GM12878 (cell line): ENCODE measurements at regions of chr9 and their contacts with region 1.

Region 1: DNA sequence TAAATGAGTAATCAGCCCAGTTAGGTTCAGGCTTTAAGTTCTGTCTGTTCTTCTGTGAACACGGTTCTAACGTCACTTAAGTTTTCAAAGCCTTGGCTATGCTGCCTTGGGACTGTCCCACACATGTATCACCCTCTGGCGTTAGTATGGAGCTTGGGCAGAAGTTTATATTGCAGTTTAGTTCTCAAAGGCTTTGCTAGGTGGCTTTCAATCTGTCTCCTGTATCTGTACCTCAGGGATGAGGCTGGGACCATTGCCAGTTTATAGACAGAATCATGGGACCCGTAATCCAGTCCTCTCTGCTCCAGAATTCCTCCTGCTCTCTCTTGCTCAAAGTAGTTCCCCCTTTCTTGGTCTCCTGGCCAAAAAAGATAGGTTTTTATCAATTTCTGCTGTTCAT is 12.1 kb downstream of the C9orf40 start:
- DNase-seq: no peak
- ATAC-seq: peak; percentile 84
- H3K4me3 ChIP-seq: no peak overlapping the region
- H3K27ac ChIP-seq: no peak overlapping the region
- H3K4me1 ChIP-seq: no peaks in the 10 kb centered on the region
- H3K27me3 ChIP-seq: no peaks in the 10 kb centered on the region
- CTCF ChIP-seq: peak in 2 of 3 experiments; percentile 6 to 34; a peak in 1 of 6 replicates
- EP300 ChIP-seq: no peak
- POLR2A ChIP-seq: no peak
- RAD21 ChIP-seq: no peak

Region 2: DNA sequence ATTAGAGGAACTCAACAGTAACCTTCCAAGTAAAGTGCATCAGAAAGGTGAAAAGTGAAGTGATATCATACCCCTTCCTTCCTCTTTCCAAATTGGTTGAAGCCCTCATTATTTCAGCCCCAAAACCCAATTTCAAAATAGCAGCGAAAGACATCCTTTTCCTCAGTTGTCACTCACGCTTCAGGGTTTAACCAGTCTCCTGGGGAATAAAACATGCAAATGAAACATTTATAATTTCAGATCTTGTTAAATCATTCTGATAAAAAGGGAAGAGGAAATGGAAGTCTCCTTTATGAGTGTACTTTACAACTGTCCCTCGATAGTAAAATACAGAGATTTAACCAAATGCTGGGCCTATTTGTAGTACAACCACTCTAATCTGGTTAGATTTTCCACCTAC is 75.4 kb before region 1 on chr9:
- CTCF ChIA-PET with region 1: no interaction called
- POLR2A ChIA-PET with region 1: no interaction called
- RAD21 ChIA-PET with region 1: no interaction called
- SMC1A ChIA-PET with region 1: no interaction called
- in situ Hi-C with region 1: no loop called
- intact Hi-C with region 1: loop called (anchors 5 kb)
- DNase-seq: peak; percentile 46
- ATAC-seq: peak; percentile 76
- H3K4me3 ChIP-seq: no peak overlapping the region
- H3K27ac ChIP-seq: no peak overlapping the region
- H3K4me1 ChIP-seq: peaks cover 4% of the 10 kb centered on the region; the same call in 1 of the 2 replicates
- H3K27me3 ChIP-seq: no peaks in the 10 kb centered on the region
- CTCF ChIP-seq: no peak
- EP300 ChIP-seq: no peak
- POLR2A ChIP-seq: no peak
- RAD21 ChIP-seq: no peak

Region 3: GRCh38 chr9:74887041-74887980 is 53.3 kb before region 1 on chr9 and contains the start of gene TRPM6:
- CTCF ChIA-PET with region 1: no interaction called
- POLR2A ChIA-PET with region 1: no interaction called
- RAD21 ChIA-PET with region 1: no interaction called
- SMC1A ChIA-PET with region 1: no interaction called
- in situ Hi-C with region 1: no loop called
- intact Hi-C with region 1: no loop called
- DNase-seq: no peak
- ATAC-seq: peak; percentile 64
- H3K4me3 ChIP-seq: 0 out of 2 replicates have a peak within 1 kb of the TSS, but pooled peaks have one; percentile 11
- H3K27ac ChIP-seq: no peak within 1 kb of the TSS
- H3K4me1 ChIP-seq: no peaks in the 10 kb centered on the region
- H3K27me3 ChIP-seq: peaks cover 0 to 12% of the 10 kb centered on the region in 2 experiments; a peak in 2 of 4 replicates
- CTCF ChIP-seq: no peak
- EP300 ChIP-seq: no peak
- POLR2A ChIP-seq: no peak
- RAD21 ChIP-seq: no peak
- polyA plus RNA-seq, gene TRPM6: 0.03 TPM in 1 of 2 experiments, not detected in the other

Region 4: DNA sequence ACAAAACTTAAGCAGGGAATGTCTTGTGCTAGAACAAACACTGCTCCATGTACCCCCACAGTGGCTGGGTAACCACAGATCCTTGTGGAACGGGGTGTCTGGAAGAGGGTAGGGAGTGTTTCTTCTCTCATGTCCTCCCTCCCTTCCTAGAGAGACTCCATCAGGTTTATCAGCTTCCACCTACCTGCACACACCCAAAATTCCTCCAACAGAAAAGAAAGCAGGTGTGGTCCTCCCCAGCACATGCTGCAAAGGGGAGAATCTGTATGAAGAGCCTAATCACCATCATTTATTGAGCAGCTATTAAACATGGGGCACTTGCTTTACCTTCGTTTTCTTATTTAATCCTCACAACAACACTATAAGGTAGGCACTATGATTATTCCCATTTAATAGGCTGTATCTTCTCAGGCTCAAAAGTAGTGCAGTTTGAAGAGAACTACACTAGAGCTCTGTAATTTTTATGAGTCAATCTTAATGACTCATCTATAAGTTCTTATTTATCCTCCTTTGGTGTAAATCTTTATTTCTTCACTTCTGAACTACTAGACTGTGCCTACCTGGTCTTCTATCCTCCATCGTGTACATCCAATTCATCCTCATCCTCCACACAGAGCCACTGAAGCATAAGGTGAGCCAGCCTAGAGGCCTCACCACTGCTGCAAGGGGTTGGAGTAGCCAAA is 19.5 kb before region 1 on chr9:
- CTCF ChIA-PET with region 1: no interaction called
- POLR2A ChIA-PET with region 1: no interaction called
- RAD21 ChIA-PET with region 1: no interaction called
- SMC1A ChIA-PET with region 1: no interaction called
- in situ Hi-C with region 1: no loop called
- intact Hi-C with region 1: no loop called
- DNase-seq: no peak
- ATAC-seq: no peak
- H3K4me3 ChIP-seq: no peak overlapping the region
- H3K27ac ChIP-seq: no peak overlapping the region
- H3K4me1 ChIP-seq: no peaks in the 10 kb centered on the region
- H3K27me3 ChIP-seq: no peaks in the 10 kb centered on the region; a peak in 1 of 4 replicates
- CTCF ChIP-seq: no peak
- EP300 ChIP-seq: no peak
- POLR2A ChIP-seq: no peak
- RAD21 ChIP-seq: no peak

Region 5: GRCh38 chr9:74973714-74974113 is 33.1 kb after region 1 on chr9:
- CTCF ChIA-PET with region 1: no interaction called
- POLR2A ChIA-PET with region 1: no interaction called
- RAD21 ChIA-PET with region 1: no interaction called
- SMC1A ChIA-PET with region 1: no interaction called
- in situ Hi-C with region 1: no loop called
- intact Hi-C with region 1: no loop called
- DNase-seq: no peak
- ATAC-seq: no peak
- H3K4me3 ChIP-seq: no peak overlapping the region
- H3K27ac ChIP-seq: no peak overlapping the region
- H3K4me1 ChIP-seq: no peaks in the 10 kb centered on the region
- H3K27me3 ChIP-seq: no peaks in the 10 kb centered on the region
- CTCF ChIP-seq: no peak
- EP300 ChIP-seq: no peak
- POLR2A ChIP-seq: no peak
- RAD21 ChIP-seq: no peak

Region 6: DNA sequence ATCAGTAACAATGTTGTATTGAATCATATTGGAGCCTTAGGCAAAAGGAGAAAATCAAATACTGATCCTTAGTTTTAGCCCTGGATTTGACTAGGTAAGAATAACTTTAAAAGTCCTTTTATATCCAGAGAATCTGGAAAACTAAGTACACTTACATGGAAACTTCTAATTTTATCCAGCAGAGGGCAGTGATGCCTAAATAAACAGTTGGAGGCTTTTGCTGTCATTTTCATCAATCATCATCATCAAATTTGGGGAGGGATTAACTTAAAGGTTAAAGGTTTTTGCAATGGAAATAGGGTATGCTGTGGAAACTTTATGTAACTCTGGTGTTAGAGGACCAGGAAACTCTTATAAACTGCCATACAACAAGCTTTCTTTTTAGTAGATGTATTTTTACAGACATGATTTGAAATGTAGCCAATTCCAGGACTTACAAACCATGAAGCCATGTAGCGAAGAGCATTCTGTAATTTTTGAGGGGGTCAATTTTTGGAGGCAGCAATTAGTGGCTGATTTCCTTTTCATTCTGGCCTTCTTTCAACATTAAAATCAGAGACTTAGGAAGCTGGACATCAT is 260.4 kb after region 1 on chr9:
- CTCF ChIA-PET with region 1: no interaction called
- POLR2A ChIA-PET with region 1: no interaction called
- RAD21 ChIA-PET with region 1: no interaction called
- SMC1A ChIA-PET with region 1: no interaction called
- in situ Hi-C with region 1: no loop called
- intact Hi-C with region 1: no loop called
- DNase-seq: no peak
- ATAC-seq: peak; percentile 46; the same call in 1 of the 3 replicates
- H3K4me3 ChIP-seq: no peak overlapping the region
- H3K27ac ChIP-seq: no peak overlapping the region
- H3K4me1 ChIP-seq: no peaks in the 10 kb centered on the region
- H3K27me3 ChIP-seq: no peaks in the 10 kb centered on the region
- CTCF ChIP-seq: peak; percentile 30 to 57 (median 49); a peak in 4 of 6 replicates
- EP300 ChIP-seq: no peak
- POLR2A ChIP-seq: no peak
- RAD21 ChIP-seq: peak; percentile 72